CD8-positive, alpha-beta T cell (primary cell): ENCODE measurements at regions of chr10 and their contacts with region 1.

Region 1: DNA sequence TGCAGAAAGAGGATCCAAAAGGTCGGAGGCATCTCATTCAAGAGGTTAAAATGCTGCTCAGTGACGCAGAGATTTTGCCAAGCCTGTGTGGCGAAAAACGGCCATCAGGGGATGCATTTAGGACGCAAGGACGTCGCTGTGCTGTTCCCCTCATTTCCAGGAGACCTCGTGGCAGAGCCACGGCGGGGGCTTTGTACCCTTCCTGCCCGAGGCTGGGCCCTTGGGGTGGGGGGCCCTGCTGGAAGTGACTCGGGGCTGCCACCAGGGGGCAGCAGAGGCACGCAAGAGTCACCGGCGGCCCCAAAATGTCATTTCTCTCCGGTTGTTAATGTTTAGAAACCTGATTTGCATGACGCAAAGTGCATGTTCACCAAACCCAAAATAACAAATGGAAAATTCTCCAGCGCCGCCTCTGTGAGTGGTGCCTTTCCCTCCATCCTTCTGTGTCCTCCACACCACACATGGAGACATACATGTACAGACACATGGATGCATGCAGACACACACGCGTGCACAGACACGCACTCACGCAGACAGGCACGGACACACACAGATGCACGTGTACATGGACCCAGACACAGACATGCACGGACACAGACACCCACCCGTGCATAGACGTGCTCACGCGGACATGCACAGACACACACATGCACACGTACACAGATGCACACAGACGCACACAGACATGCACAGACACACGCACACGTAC is 51.0 kb upstream of the NKX6-2 start:
- DNase-seq: peak in 8 of 9 experiments; percentile 9 to 68 (median 46)
- ATAC-seq: no peak
- H3K4me3 ChIP-seq: no peak overlapping the region
- H3K4me3 Mint-ChIP-seq: no peak overlapping the region
- H3K27ac ChIP-seq: no peak overlapping the region
- H3K27ac Mint-ChIP-seq: no peak overlapping the region
- H3K4me1 ChIP-seq: no peaks in the 10 kb centered on the region
- H3K4me1 Mint-ChIP-seq: no peaks in the 10 kb centered on the region
- H3K27me3 ChIP-seq: peaks cover 0 to 2% of the 10 kb centered on the region in 2 experiments
- H3K27me3 Mint-ChIP-seq: peaks cover under 1% of the 10 kb centered on the region
- CTCF ChIP-seq: peak; percentile 95

Region 2: GRCh38 chr10:133124357-133125211 is 287.6 kb after region 1 on chr10:
- CTCF ChIA-PET with region 1: no interaction called
- POLR2A ChIA-PET with region 1: no interaction called
- intact Hi-C with region 1: loop called in 1 of 2 experiments (anchors 5 kb)
- DNase-seq: no peak
- ATAC-seq: no peak
- H3K4me3 ChIP-seq: no peak overlapping the region
- H3K4me3 Mint-ChIP-seq: no peak overlapping the region
- H3K27ac ChIP-seq: no peak overlapping the region
- H3K27ac Mint-ChIP-seq: no peak overlapping the region
- H3K4me1 ChIP-seq: no peaks in the 10 kb centered on the region
- H3K4me1 Mint-ChIP-seq: peaks cover 5% of the 10 kb centered on the region
- H3K27me3 ChIP-seq: peaks cover 0 to 2% of the 10 kb centered on the region in 2 experiments
- H3K27me3 Mint-ChIP-seq: peaks cover 12% of the 10 kb centered on the region
- CTCF ChIP-seq: no peak

Region 3: DNA sequence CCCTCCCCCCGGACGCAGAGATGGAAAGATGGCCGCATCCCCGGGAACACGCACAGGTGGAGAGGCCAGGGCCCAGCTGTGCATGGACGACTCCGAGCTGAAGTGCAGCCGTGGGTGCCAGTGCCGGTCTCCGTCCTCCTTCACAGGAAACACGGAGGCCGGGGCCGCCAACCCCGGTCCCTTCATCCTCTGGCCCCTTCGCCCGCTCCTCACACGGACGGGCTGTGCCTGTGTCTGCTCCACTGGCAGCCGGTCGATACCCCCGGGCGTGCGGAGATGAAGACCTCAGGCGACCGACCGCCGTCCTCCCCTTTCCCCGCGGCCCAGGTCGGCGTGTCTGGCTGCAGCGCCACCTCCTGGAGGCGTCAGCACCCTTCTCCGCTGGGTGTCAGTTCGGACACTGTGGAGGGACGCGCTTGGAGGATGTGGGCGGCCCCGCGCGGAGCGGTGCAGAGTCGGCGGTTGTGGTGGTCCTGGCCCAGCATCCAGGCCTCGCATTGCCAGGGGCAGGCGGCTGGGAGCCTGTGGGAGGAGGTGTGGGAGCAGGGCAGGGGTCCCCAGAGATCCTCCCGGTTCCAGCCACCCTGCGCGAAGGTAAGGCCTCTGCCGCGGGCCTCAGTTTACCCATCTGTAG is 481.6 kb after region 1 on chr10:
- CTCF ChIA-PET with region 1: no interaction called
- POLR2A ChIA-PET with region 1: no interaction called
- intact Hi-C with region 1: loop called in 1 of 2 experiments (anchors 5 kb)
- DNase-seq: peak; percentile 49 to 80 (median 70)
- ATAC-seq: peak; percentile 89
- H3K4me3 ChIP-seq: peak overlapping the region; percentile 50 to 60
- H3K4me3 Mint-ChIP-seq: peak overlapping the region; percentile 63
- H3K27ac ChIP-seq: no peak overlapping the region
- H3K27ac Mint-ChIP-seq: no peak overlapping the region
- H3K4me1 ChIP-seq: peaks cover 7% of the 10 kb centered on the region
- H3K4me1 Mint-ChIP-seq: peaks cover 11% of the 10 kb centered on the region
- H3K27me3 ChIP-seq: peaks cover 0 to 10% of the 10 kb centered on the region in 2 experiments
- H3K27me3 Mint-ChIP-seq: peaks cover 9% of the 10 kb centered on the region
- CTCF ChIP-seq: peak; percentile 80

Region 4: DNA sequence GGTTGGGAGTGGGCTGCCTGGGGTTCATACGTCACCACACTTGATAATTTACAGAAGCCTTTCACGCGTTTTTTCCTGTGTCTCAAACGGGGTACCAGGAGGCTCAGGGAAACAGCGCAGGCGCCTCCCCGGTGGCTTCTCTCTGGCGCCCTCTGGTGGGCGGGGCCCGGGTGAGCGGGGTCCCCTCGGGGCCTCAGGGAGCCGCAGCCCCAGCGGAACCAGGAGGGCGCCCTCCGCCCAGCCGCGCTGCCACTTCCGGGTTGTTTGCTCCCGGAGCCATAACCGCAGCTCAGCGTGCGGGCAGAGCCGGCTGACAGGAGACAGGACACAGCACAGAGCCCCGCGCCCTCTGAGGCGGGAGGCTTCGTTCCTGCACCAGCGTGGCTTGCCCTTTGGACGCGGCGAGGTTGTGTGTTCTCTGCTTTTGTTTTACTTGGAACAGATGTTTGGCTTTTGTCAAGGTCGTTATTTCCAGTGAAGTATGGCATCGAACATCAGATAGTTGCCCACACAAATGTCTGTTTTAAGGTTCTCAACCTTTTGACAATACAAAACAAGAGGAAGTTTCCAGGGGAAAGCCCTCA is 683.3 kb after region 1 on chr10:
- CTCF ChIA-PET with region 1: no interaction called
- POLR2A ChIA-PET with region 1: no interaction called
- intact Hi-C with region 1: loop called in 1 of 2 experiments (anchors 5 kb)
- DNase-seq: peak; percentile 78 to 97 (median 89)
- ATAC-seq: peak; percentile 99
- H3K4me3 ChIP-seq: peak overlapping the region; percentile 47 to 61
- H3K4me3 Mint-ChIP-seq: peak overlapping the region; percentile 63
- H3K27ac ChIP-seq: no peak overlapping the region
- H3K27ac Mint-ChIP-seq: peak overlapping the region; percentile 45
- H3K4me1 ChIP-seq: peaks cover 6% of the 10 kb centered on the region
- H3K4me1 Mint-ChIP-seq: peaks cover 13% of the 10 kb centered on the region
- H3K27me3 ChIP-seq: no peaks in the 10 kb centered on the region
- H3K27me3 Mint-ChIP-seq: peaks cover 3% of the 10 kb centered on the region
- CTCF ChIP-seq: peak; percentile 88